ENCODE measurements at regions of chr6 and their contacts with region 1.

Region 1: GRCh38 chr6:134822920-134823709 is 126.8 kb downstream of the ALDH8A1 start:
- DNase-seq: peak; percentile 84
- H3K4me3 ChIP-seq: no peak overlapping the region
- H3K27ac ChIP-seq: no peak overlapping the region
- H3K4me1 ChIP-seq: no peaks in the 10 kb centered on the region
- H3K27me3 ChIP-seq: no peaks in the 10 kb centered on the region
- CTCF ChIP-seq: peak; percentile 85 to 88
- POLR2A ChIP-seq: no peak

Region 2: GRCh38 chr6:134145786-134146185 is 677.3 kb before region 1 on chr6:
- CTCF ChIA-PET with region 1: interaction called, 10 read pairs
- POLR2A ChIA-PET with region 1: no interaction called
- dilution Hi-C with region 1: no loop called
- intact Hi-C with region 1: no loop called
- DNase-seq: no peak
- H3K4me3 ChIP-seq: no peak overlapping the region
- H3K27ac ChIP-seq: no peak overlapping the region
- H3K4me1 ChIP-seq: no peaks in the 10 kb centered on the region
- H3K27me3 ChIP-seq: peaks cover 0 to 2% of the 10 kb centered on the region in 2 experiments
- CTCF ChIP-seq: no peak
- POLR2A ChIP-seq: no peak

Region 3: DNA sequence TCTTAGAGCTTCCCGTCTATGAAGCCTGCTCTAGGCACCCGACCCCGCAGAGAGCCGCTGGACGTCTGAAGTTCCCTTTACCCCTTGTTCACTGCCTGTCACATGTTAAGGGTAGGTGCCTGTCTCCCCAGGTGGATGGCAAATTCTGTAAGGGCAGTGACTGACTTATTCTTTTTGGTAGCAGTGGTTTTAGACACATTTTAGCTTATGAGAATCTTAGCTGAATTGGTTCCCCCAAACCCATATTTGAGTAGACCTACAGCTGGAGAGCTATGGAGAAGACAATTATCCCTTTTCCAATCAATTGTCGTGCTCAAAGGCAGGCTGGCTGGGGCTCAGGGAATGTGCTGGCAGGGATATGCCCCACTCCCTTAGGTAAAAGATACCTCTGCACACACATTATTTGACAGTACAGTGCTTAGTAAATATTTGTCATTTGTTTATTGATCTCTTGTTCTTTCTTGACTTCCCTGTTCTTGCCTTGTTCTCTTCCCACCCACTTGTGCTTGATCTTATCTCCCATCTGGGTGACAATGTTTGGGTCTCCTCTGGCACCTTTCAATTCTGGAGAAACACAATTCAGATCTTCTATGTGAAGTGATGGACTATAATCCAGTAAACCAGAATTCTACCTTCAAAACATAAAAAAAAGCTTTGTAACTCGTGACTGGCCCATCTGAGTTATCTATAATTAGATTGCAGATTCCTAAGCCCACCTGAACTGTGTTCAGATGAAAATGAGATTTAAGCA is 656.4 kb before region 1 on chr6:
- CTCF ChIA-PET with region 1: interaction called, 24 read pairs
- POLR2A ChIA-PET with region 1: interaction called, 3 read pairs
- dilution Hi-C with region 1: no loop called
- intact Hi-C with region 1: no loop called
- DNase-seq: no peak
- H3K4me3 ChIP-seq: no peak overlapping the region
- H3K27ac ChIP-seq: no peak overlapping the region
- H3K4me1 ChIP-seq: peaks cover 22% of the 10 kb centered on the region
- H3K27me3 ChIP-seq: no peaks in the 10 kb centered on the region
- CTCF ChIP-seq: no peak
- POLR2A ChIP-seq: peak; percentile 60

Region 4: GRCh38 chr6:134422426-134423231 is 400.5 kb before region 1 on chr6:
- CTCF ChIA-PET with region 1: no interaction called
- POLR2A ChIA-PET with region 1: no interaction called
- dilution Hi-C with region 1: no loop called
- intact Hi-C with region 1: loop called (anchors 2 kb)
- DNase-seq: peak; percentile 81
- H3K4me3 ChIP-seq: no peak overlapping the region
- H3K27ac ChIP-seq: peak overlapping the region; percentile 90
- H3K4me1 ChIP-seq: peaks cover 68% of the 10 kb centered on the region
- H3K27me3 ChIP-seq: no peaks in the 10 kb centered on the region
- CTCF ChIP-seq: no peak
- POLR2A ChIP-seq: peak; percentile 61

Region 5: GRCh38 chr6:134640975-134641429 is 182.1 kb before region 1 on chr6:
- CTCF ChIA-PET with region 1: interaction called, 40 read pairs
- POLR2A ChIA-PET with region 1: no interaction called
- dilution Hi-C with region 1: no loop called
- intact Hi-C with region 1: loop called (anchors 1 kb)
- DNase-seq: peak; percentile 84
- H3K4me3 ChIP-seq: no peak overlapping the region
- H3K27ac ChIP-seq: peak overlapping the region; percentile 6
- H3K4me1 ChIP-seq: no peaks in the 10 kb centered on the region
- H3K27me3 ChIP-seq: no peaks in the 10 kb centered on the region
- CTCF ChIP-seq: peak; percentile 86 to 94
- POLR2A ChIP-seq: no peak

Region 6: DNA sequence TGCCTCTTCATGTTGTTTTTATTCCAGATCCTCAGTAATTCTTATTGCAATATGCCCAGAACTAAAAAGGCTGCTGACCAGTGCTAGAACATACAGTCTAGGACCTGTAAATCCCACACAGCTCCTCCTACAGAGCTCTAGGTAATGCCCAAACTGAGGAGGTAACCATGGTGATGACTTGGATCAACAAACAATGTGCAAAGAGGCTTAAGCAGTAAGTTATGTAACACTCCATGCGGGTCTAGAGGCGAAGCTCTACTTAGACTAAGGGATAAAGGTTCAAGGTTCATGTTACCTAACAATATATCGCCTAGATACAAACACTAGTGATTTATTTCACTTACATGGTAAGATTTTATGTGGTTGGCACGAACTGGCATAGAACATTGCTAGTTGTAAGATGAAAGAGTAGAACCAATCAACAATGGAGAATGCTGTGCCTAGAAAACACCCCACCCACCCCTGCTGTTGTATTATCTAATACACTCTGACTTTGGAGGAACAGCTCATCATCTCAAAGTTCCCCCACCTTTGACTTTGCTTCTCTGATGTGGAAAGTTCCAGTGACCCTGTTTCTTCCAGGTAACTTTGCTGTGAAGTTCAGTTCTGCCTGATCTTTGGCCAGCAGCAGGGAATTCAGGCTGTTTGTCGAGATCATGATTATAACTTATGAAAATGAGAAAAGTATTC is 115.6 kb before region 1 on chr6:
- CTCF ChIA-PET with region 1: no interaction called
- POLR2A ChIA-PET with region 1: no interaction called
- dilution Hi-C with region 1: no loop called
- intact Hi-C with region 1: no loop called
- DNase-seq: no peak
- H3K4me3 ChIP-seq: no peak overlapping the region
- H3K27ac ChIP-seq: no peak overlapping the region
- H3K4me1 ChIP-seq: no peaks in the 10 kb centered on the region
- H3K27me3 ChIP-seq: peaks cover 0 to 3% of the 10 kb centered on the region in 2 experiments
- CTCF ChIP-seq: no peak
- POLR2A ChIP-seq: no peak

Region 7: GRCh38 chr6:134835993-134836392 is 12.9 kb after region 1 on chr6:
- CTCF ChIA-PET with region 1: interaction called, 13 read pairs
- POLR2A ChIA-PET with region 1: no interaction called
- dilution Hi-C with region 1: no loop called
- intact Hi-C with region 1: no loop called
- DNase-seq: no peak
- H3K4me3 ChIP-seq: no peak overlapping the region
- H3K27ac ChIP-seq: no peak overlapping the region
- H3K4me1 ChIP-seq: no peaks in the 10 kb centered on the region
- H3K27me3 ChIP-seq: peaks cover 0 to 5% of the 10 kb centered on the region in 2 experiments
- CTCF ChIP-seq: no peak
- POLR2A ChIP-seq: no peak

Region 8: GRCh38 chr6:134918418-134918961 is 95.4 kb after region 1 on chr6:
- CTCF ChIA-PET with region 1: no interaction called
- POLR2A ChIA-PET with region 1: no interaction called
- dilution Hi-C with region 1: no loop called
- intact Hi-C with region 1: no loop called
- DNase-seq: no peak
- H3K4me3 ChIP-seq: no peak overlapping the region
- H3K27ac ChIP-seq: no peak overlapping the region
- H3K4me1 ChIP-seq: peaks cover 4% of the 10 kb centered on the region
- H3K27me3 ChIP-seq: peaks cover 0 to 2% of the 10 kb centered on the region in 2 experiments
- CTCF ChIP-seq: no peak
- POLR2A ChIP-seq: no peak

Measured in endothelial cell of umbilical vein (primary cell).